Endothelial cell of umbilical vein (primary cell): ENCODE measurements at regions of chr9 and their contacts with region 1.

Region 1: GRCh38 chr9:34603610-34604231 is 8.2 kb downstream of the RPP25L start:
- DNase-seq: peak; percentile 77
- H3K4me3 ChIP-seq: no peak overlapping the region
- H3K27ac ChIP-seq: no peak overlapping the region
- H3K4me1 ChIP-seq: no peaks in the 10 kb centered on the region
- H3K27me3 ChIP-seq: peaks cover 0 to 10% of the 10 kb centered on the region in 2 experiments
- CTCF ChIP-seq: peak; percentile 85 to 89
- POLR2A ChIP-seq: no peak

Region 2: GRCh38 chr9:34328987-34329832 is 274.5 kb before region 1 on chr9 and contains the starts of genes KIF24 and NUDT2:
- CTCF ChIA-PET with region 1: interaction called, 12 read pairs
- POLR2A ChIA-PET with region 1: no interaction called
- dilution Hi-C with region 1: no loop called
- intact Hi-C with region 1: loop called (anchors 1 kb)
- DNase-seq: peak; percentile 100
- H3K4me3 ChIP-seq: peak within 1 kb of the TSS; percentile 75 to 89 (median 87)
- H3K27ac ChIP-seq: peak within 1 kb of the TSS; percentile 89
- H3K4me1 ChIP-seq: peaks cover 8% of the 10 kb centered on the region
- H3K27me3 ChIP-seq: no peaks in the 10 kb centered on the region
- CTCF ChIP-seq: no peak
- POLR2A ChIP-seq: peak; percentile 91
- total RNA-seq, gene KIF24: 4.5 and 4.8 TPM in 2 replicates
- total RNA-seq, gene NUDT2: 25.1 and 25.2 TPM in 2 replicates

Region 3: GRCh38 chr9:34430843-34431437 is 172.8 kb before region 1 on chr9:
- CTCF ChIA-PET with region 1: interaction called, 17 read pairs
- POLR2A ChIA-PET with region 1: no interaction called
- dilution Hi-C with region 1: no loop called
- intact Hi-C with region 1: no loop called
- DNase-seq: peak; percentile 64
- H3K4me3 ChIP-seq: no peak overlapping the region
- H3K27ac ChIP-seq: no peak overlapping the region
- H3K4me1 ChIP-seq: peaks cover 15% of the 10 kb centered on the region
- H3K27me3 ChIP-seq: no peaks in the 10 kb centered on the region
- CTCF ChIP-seq: no peak
- POLR2A ChIP-seq: no peak

Region 4: DNA sequence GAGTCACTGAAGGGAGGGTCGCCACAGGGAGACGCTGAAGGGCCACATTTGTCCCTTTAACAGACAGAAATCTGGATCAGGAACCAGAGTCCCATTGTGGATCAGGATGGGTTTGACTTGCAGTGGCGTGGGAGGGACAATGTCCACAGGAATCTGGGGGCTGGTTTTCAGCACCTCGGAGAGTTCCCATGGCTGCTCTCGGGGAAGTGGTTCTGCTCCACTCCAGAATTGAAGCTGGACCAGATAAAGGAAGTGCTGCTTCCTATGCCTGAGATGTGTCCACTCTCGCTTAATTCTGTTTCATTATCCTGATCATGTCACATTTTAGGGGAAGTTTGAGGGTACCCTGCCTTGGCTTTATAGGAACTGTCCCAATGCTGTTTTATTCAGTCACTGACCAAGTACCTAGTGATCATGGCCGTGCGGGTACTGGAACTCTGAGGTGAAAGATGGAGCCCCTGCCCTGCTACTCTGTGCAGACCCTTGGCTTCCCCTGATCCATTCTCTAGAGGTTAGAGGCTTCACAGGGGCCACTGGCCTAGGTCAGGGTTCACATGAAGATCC is 109.7 kb before region 1 on chr9:
- CTCF ChIA-PET with region 1: interaction called, 13 read pairs
- POLR2A ChIA-PET with region 1: no interaction called
- dilution Hi-C with region 1: no loop called
- intact Hi-C with region 1: no loop called
- DNase-seq: peak; percentile 49
- H3K4me3 ChIP-seq: no peak overlapping the region
- H3K27ac ChIP-seq: no peak overlapping the region
- H3K4me1 ChIP-seq: peaks cover 14% of the 10 kb centered on the region
- H3K27me3 ChIP-seq: peaks cover 6 to 8% of the 10 kb centered on the region in 2 experiments
- CTCF ChIP-seq: no peak
- POLR2A ChIP-seq: no peak

Region 5: GRCh38 chr9:34578241-34579103 is 25.2 kb before region 1 on chr9:
- CTCF ChIA-PET with region 1: interaction called, 12 read pairs
- POLR2A ChIA-PET with region 1: no interaction called
- dilution Hi-C with region 1: no loop called
- intact Hi-C with region 1: no loop called
- DNase-seq: peak; percentile 28
- H3K4me3 ChIP-seq: no peak overlapping the region
- H3K27ac ChIP-seq: no peak overlapping the region
- H3K4me1 ChIP-seq: no peaks in the 10 kb centered on the region
- H3K27me3 ChIP-seq: peaks cover 59 to 61% of the 10 kb centered on the region in 2 experiments
- CTCF ChIP-seq: no peak
- POLR2A ChIP-seq: no peak

Region 6: DNA sequence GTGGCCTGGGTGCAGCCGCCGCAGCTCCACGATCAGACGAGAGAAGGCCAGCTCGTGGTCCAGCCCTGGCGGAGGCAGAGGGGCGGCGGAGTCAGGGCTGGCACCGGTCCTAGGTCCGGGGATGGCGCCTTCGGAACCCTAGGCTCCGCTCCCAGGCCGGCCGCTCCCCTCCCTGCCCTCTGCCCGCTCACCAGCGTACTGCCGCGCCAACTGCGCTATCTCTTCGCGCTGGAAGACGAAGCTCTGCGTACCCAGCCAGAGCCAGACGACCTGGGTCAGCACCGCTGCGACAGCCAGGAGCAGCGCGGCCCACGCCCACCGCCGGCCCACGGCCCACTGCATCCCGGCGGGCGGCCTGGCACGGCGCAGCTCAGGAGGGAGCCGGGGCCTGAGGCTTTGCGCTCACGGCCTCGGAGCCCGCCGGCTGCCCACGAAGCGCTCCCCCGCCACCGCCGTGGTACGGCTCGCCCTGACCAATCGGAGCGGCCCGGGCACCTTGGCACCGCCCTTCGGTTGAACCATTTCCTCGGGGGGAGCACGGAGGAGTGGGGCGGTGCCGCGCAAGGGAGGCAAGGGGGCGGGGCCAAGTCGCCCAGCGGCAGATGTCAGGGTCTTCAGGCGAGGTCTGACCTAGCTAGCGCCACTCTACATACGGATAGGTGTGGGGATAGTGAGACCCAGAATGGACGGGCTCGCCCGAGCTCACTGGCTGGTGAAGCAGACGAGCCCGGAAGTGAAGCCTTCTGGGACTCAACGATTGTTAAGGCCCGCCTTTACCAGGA is 33.8 kb after region 1 on chr9 and contains the start of gene SIGMAR1:
- CTCF ChIA-PET with region 1: interaction called, 28 read pairs
- POLR2A ChIA-PET with region 1: no interaction called
- dilution Hi-C with region 1: no loop called
- intact Hi-C with region 1: no loop called
- DNase-seq: peak; percentile 91
- H3K4me3 ChIP-seq: peak within 1 kb of the TSS; percentile 10 to 63 (median 47)
- H3K27ac ChIP-seq: peak within 1 kb of the TSS; percentile 33
- H3K4me1 ChIP-seq: peaks cover 16% of the 10 kb centered on the region
- H3K27me3 ChIP-seq: no peaks in the 10 kb centered on the region
- CTCF ChIP-seq: no peak
- POLR2A ChIP-seq: peak; percentile 81
- total RNA-seq, gene SIGMAR1: 74.1 and 81.2 TPM in 2 replicates

Region 7: DNA sequence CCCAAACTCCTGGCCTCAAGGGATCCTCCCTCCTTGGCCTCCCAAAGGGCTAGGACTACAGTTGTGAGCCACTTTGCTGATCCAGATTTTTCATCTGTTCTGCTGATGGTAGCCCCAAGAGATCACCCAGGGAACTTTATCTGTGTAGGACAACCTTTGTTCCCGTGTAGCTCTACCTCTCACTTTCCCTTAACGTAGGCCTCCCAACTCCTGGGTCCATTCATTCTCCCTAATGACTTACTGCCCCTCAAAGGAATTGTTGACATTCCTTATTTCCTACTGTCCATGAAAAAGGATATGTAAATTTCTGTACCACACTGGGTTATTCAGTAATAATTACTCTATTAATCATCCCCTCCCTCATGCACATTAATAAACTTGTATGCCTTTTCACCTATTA is 303.3 kb after region 1 on chr9:
- CTCF ChIA-PET with region 1: no interaction called
- POLR2A ChIA-PET with region 1: no interaction called
- dilution Hi-C with region 1: no loop called
- intact Hi-C with region 1: no loop called
- DNase-seq: no peak
- H3K4me3 ChIP-seq: no peak overlapping the region
- H3K27ac ChIP-seq: no peak overlapping the region
- H3K4me1 ChIP-seq: no peaks in the 10 kb centered on the region
- H3K27me3 ChIP-seq: peaks cover 10 to 27% of the 10 kb centered on the region in 2 experiments
- CTCF ChIP-seq: no peak
- POLR2A ChIP-seq: no peak

Region 8: GRCh38 chr9:36551129-36551528 is 1947.4 kb after region 1 on chr9:
- CTCF ChIA-PET with region 1: no interaction called
- POLR2A ChIA-PET with region 1: no interaction called
- dilution Hi-C with region 1: no loop called
- intact Hi-C with region 1: no loop called
- DNase-seq: no peak
- H3K4me3 ChIP-seq: no peak overlapping the region
- H3K27ac ChIP-seq: no peak overlapping the region
- H3K4me1 ChIP-seq: no peaks in the 10 kb centered on the region
- H3K27me3 ChIP-seq: peaks cover 10% of the 10 kb centered on the region in 2 experiments
- CTCF ChIP-seq: no peak
- POLR2A ChIP-seq: no peak